ENCODE measurements at regions of chr12 and their contacts with region 1.

Region 1: GRCh38 chr12:96219698-96220206 is 25.6 kb downstream of the ELK3 start:
- DNase-seq: peak in 1 of 2 experiments; percentile 53
- H3K4me3 ChIP-seq: no peak overlapping the region
- H3K27ac ChIP-seq: no peak overlapping the region
- H3K4me1 ChIP-seq: peaks cover 0 to 12% (median 2%) of the 10 kb centered on the region in 4 experiments; a peak in 3 of 7 replicates
- H3K27me3 ChIP-seq: no peaks in the 10 kb centered on the region
- CTCF ChIP-seq: no peak
- EP300 ChIP-seq: no peak
- POLR2A ChIP-seq: no peak
- RAD21 ChIP-seq: no peak

Region 2: DNA sequence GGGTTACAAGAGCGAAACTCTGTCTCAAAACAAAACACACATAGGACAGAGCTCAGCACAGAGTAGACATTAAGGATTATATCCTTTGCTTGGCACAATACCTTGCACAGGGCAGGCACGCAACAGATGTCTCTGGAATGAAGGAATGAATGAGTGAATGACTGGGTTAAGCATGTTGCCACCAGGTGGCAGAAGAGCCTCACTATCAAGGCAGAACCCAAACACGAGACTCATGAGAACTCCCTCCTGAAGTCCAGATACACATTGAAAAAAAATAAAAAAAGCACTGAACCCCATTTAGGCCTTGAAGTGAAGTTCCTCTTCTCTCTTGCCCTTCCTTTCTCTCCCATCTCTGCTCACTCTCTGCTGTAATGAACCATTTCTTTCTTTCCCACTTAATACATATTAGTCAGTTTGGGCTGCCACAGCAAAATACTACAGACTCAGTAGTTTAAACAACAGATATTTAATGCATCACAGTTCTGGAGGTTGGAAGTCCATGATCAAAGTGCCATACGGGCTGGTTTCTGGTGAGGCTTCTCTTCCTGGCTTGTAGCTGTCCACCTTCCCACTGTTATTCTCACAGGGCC is 157.8 kb before region 1 on chr12:
- CTCF ChIA-PET with region 1: interaction called, 31 read pairs
- POLR2A ChIA-PET with region 1: interaction called, 3 read pairs
- DNase-seq: peak; percentile 39 to 72
- H3K4me3 ChIP-seq: no peak overlapping the region
- H3K27ac ChIP-seq: no peak overlapping the region
- H3K4me1 ChIP-seq: peaks cover 0 to 8% (median 0%) of the 10 kb centered on the region in 4 experiments; a peak in 3 of 7 replicates
- H3K27me3 ChIP-seq: no peaks in the 10 kb centered on the region
- CTCF ChIP-seq: peak; percentile 50 to 87 (median 79)
- EP300 ChIP-seq: no peak
- POLR2A ChIP-seq: no peak
- RAD21 ChIP-seq: peak; percentile 95 to 96

Region 3: GRCh38 chr12:96368233-96368632 is 148.5 kb after region 1 on chr12:
- CTCF ChIA-PET with region 1: no interaction called
- POLR2A ChIA-PET with region 1: no interaction called
- DNase-seq: no peak
- H3K4me3 ChIP-seq: no peak overlapping the region
- H3K27ac ChIP-seq: no peak overlapping the region
- H3K4me1 ChIP-seq: peaks cover 0 to 7% (median 0%) of the 10 kb centered on the region in 4 experiments; a peak in 2 of 7 replicates
- H3K27me3 ChIP-seq: no peaks in the 10 kb centered on the region
- CTCF ChIP-seq: no peak
- EP300 ChIP-seq: no peak
- POLR2A ChIP-seq: no peak
- RAD21 ChIP-seq: no peak

Measured in H1 (cell line).